ENCODE measurements at regions of chr2 and their contacts with region 1.

Region 1: DNA sequence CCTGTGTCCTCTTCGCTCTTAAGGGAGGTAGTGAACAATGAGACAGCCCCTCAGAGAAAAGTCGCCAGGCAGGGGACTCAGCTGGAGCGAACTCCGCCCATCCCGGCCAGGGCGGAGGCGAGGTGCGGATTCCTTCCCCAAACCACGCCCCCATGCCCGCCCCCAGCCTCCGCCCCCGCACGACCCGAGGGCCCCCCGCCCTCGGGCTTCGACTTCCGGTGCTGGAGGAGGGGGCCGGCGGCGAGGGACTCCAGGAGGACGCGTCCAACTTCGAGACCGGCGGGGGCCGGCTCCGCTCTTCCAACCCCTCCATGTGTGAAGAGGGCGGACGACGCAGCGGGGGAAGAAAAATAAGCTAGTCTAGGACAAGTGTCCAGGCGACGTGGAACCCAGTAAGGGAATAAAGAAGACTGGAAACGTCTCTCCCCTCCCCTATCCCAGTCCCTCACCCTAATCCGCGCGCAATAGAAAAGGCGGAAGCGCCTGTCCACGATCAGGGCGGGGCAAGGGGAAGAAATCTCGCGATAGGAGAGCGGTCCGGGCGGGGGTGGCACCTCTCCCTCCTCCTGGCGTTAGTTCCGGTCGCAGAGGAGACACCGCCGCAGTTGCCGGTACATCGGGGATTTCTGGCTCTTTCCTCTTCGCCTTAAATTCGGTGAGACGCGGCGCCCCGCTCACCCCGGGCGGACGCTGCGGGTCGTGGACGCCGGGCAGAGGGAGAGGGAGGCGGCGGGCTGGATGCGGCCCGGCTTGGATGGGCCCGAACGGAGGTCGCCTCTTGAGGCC is at the start of gene BZW1:
- DNase-seq: peak; percentile 88 to 97 (median 95)
- H3K4me3 ChIP-seq: peak within 1 kb of the TSS; percentile 72 to 100 (median 95)
- H3K27ac ChIP-seq: peak within 1 kb of the TSS; percentile 84 to 100 (median 98)
- H3K27me3 ChIP-seq: no peaks in the 10 kb centered on the region
- CTCF ChIP-seq: peak in 8 of 56 donors; percentile 3 to 41 (median 20)
- total RNA-seq, gene BZW1: 80.5 to 158 (median 116) TPM

Region 2: DNA sequence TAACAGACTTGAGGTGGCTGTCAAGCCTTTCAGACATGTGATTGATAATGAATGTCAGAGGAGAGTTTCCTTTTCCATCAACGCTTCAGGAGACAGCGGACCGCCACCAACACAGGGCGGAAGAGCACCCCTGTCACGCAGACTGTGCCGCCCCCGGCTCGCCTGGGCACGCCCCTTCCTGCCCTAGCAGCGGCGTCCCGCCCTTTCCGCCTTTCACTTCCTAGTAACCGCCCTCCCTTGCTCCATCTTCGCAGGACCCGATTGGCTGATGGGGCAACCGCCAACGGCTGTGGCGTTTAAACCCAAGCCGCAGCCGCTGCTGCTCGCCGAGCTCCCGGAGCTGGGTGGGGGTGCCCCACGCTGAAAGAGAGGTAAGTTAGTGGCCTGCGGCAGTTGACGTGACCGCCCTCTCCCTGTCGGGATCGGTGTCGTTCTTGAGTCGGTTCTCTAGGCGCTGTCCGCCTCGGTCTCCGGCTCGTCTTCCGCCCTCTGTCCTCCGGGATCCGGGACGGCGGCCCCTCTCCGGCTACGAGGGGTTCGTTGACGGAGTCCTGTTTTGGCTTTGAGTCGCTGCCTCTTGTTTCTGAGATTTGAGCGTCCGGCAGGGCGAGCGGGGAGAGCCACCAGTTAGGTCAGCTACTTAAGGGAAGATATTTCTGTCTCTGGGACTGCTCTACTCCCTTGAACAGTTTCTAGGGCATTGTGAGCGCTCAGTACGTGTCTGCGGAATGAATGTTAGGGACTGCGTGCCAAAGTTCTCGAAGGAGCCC is 285.5 kb before region 1 on chr2 and contains the start of gene SGO2:
- intact Hi-C with region 1: loop called in 1 of 2 experiments (anchors 10 kb)
- DNase-seq: peak; percentile 87 to 97 (median 95)
- H3K4me3 ChIP-seq: peak within 1 kb of the TSS; percentile 66 to 100 (median 84)
- H3K27ac ChIP-seq: peak within 1 kb of the TSS in 44 of 59 donors; percentile 0 to 84 (median 62)
- H3K27me3 ChIP-seq: no peaks in the 10 kb centered on the region
- CTCF ChIP-seq: peak in 37 of 56 donors; percentile 7 to 59 (median 30)
- total RNA-seq, gene SGO2: 1.7 to 6.1 (median 3.1) TPM

Region 3: GRCh38 chr2:200624658-200625057 is 186.9 kb before region 1 on chr2:
- intact Hi-C with region 1: no loop called
- DNase-seq: no peak
- H3K4me3 ChIP-seq: no peak overlapping the region
- H3K27ac ChIP-seq: no peak overlapping the region
- H3K27me3 ChIP-seq: no peaks in the 10 kb centered on the region
- CTCF ChIP-seq: no peak

Region 4: DNA sequence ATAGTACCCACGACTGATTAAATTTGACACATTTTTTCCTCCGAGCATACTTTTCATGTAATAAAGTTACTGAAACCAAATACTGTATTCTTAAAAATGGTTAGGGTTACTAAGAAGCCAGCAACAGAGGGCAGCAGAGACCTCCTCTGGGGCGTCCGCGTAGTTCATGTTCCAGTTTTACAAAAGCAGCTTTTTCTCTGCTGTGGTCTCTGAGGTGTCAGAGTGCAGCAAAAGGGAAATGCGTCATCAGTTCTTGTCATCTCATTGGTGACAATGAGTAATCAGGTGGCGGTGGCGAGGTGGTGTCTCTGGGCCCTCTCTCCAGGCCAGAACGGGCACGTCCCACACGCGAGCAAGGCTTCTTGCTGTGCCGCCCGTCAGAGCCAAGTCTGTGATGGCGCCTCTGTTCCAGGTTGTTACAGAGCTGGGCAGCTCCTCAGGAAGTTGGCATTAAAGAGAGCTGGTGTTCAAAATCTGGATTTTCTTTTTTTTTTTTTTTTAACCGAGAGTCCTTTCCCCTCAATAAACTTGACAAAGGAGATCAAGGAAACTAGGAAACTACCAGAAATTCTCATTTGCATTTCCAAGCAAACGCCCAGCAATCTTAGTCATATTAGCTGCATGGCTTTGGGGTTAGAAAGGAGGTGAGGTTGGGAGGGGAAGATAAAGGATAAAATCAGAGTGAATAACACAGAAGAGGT is 98.4 kb before region 1 on chr2:
- intact Hi-C with region 1: loop called (anchors 1 to 2 kb)
- DNase-seq: peak; percentile 55 to 92 (median 86)
- H3K4me3 ChIP-seq: peak overlapping the region; percentile 23 to 70 (median 52)
- H3K27ac ChIP-seq: peak overlapping the region; percentile 47 to 97 (median 88)
- H3K27me3 ChIP-seq: no peaks in the 10 kb centered on the region
- CTCF ChIP-seq: peak; percentile 81 to 98 (median 91)

Region 5: GRCh38 chr2:200735061-200735460 is 76.5 kb before region 1 on chr2:
- intact Hi-C with region 1: loop called in 1 of 2 experiments (anchors 5 kb)
- DNase-seq: peak in 8 of 10 donors; percentile 52 to 91 (median 70)
- H3K4me3 ChIP-seq: peak overlapping the region in 54 of 59 donors; percentile 0 to 65 (median 39)
- H3K27ac ChIP-seq: peak overlapping the region in 58 of 59 donors; percentile 9 to 94 (median 80)
- H3K27me3 ChIP-seq: peaks cover 0 to 4% (median 0%) of the 10 kb centered on the region in 45 donors
- CTCF ChIP-seq: no peak

Region 6: DNA sequence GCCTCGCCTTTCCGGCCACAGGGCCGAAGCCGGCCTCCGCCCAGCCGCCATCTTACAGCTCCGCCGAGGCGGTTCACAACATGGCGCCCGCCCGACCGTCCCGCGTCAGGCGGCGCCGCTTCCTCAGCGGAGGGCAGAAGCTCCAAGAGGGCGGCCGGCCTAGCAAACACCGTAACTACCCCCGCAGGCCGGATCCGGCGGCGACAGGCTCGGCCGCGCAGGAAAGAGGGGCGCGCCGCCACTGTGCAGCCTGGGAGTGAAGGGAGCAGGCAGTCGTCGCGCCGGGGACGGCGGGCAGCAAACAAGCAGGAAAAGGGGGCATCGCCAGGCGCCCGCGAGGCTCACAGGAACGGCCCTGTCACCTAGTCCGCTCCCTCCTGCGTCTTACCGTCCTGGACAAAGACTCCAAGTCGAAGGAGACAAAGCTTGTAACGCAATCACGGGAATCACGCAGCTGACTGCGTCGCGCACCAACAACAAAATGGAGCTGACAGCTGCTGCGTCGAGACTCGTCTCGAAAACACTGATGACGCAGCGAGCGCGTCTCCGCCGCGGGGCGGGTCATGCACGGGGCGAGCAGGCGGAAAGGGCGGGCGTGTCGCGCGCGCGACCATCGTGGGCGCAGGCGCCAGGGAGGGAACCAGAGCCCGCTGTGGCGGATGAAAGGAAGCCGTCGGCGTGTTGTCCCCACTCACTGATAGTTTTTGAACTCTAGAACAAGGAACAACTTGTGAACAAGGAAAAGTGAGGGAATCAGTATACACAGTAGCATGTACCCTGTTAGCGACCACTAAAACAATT is 52.8 kb after region 1 on chr2 and contains the start of gene CLK1:
- intact Hi-C with region 1: loop called (anchors 1 to 5 kb)
- DNase-seq: peak; percentile 93 to 97 (median 95)
- H3K4me3 ChIP-seq: peak within 1 kb of the TSS; percentile 51 to 100 (median 94)
- H3K27ac ChIP-seq: peak within 1 kb of the TSS; percentile 99 to 100 (median 100)
- H3K27me3 ChIP-seq: no peaks in the 10 kb centered on the region
- CTCF ChIP-seq: peak in 12 of 56 donors; percentile 4 to 42 (median 12)
- total RNA-seq, gene CLK1: 115 to 437 (median 174) TPM